ENCODE measurements at regions of chr19 and their contacts with region 1.

Region 1: DNA sequence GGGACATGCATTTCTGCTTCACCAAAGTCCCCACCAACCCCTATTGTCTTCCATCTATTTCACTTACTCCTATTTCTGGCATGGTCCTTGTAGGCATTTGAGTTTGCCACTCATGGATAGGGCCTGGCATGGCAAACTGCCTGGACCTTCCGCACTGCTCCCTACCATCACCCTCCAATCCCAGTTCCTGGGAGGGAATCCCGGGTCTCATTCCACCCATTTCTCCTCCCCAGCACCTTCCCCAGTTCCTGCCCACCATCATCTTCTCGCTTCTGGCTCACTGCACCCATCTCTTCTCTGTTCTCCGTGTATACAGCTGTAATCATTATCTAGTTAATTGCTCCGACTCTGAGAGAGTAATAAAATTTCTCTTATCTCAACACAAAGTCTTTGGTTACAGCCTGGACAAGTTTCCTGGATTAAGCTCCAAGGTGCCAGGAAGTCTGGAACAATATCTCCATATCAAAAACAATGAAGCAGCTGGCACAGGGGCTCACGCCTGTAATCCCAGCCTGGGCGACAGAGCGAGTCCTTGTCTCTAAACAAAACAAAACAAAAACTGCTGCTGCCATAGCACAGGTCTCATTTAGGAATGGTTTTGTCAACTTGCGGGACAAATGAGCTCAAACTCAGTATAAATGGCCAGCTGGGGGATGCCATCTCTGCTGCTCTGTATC is 17.0 kb upstream of the COX7A1 start:
- DNase-seq: no peak
- H3K4me3 ChIP-seq: no peak overlapping the region
- H3K27ac ChIP-seq: peak overlapping the region; percentile 68 to 84 (median 70)
- H3K4me1 ChIP-seq: peaks cover 17 to 24% (median 19%) of the 10 kb centered on the region in 4 donors
- H3K27me3 ChIP-seq: no peaks in the 10 kb centered on the region
- CTCF ChIP-seq: no peak
- EP300 ChIP-seq: no peak
- POLR2A ChIP-seq: no peak

Region 2: GRCh38 chr19:36060430-36060829 is 108.8 kb before region 1 on chr19:
- intact Hi-C with region 1: loop called (anchors 10 kb)
- DNase-seq: no peak
- H3K4me3 ChIP-seq: no peak overlapping the region
- H3K27ac ChIP-seq: no peak overlapping the region
- H3K4me1 ChIP-seq: peaks cover under 1 to 4% (median 2%) of the 10 kb centered on the region in 4 donors
- H3K27me3 ChIP-seq: no peaks in the 10 kb centered on the region
- CTCF ChIP-seq: peak; percentile 26 to 52 (median 29)
- EP300 ChIP-seq: no peak
- POLR2A ChIP-seq: no peak

Region 3: DNA sequence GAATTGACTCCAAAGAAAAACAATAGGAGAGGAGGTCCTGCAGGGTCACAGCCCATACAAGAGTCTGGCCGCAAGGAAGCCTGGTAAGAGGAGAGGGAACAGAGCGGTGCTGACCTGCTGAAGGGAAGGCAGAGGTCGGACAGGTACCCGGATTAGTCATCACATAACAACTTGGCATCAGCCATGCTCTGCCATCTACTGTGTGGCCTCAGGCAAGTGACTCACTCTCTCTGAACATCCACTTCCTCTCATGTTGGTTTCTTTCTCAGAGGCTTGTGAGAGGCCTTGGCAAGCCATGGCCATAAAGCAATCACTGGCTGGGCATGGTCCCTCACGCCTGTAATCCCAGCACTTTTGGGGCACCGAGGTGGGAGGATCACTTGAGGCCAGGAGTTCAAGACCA is 36.7 kb before region 1 on chr19:
- intact Hi-C with region 1: loop called (anchors 1 kb)
- DNase-seq: no peak
- H3K4me3 ChIP-seq: no peak overlapping the region
- H3K27ac ChIP-seq: no peak overlapping the region
- H3K4me1 ChIP-seq: peaks cover 20 to 35% (median 31%) of the 10 kb centered on the region in 4 donors
- H3K27me3 ChIP-seq: no peaks in the 10 kb centered on the region
- CTCF ChIP-seq: no peak
- EP300 ChIP-seq: no peak
- POLR2A ChIP-seq: no peak

Region 4: DNA sequence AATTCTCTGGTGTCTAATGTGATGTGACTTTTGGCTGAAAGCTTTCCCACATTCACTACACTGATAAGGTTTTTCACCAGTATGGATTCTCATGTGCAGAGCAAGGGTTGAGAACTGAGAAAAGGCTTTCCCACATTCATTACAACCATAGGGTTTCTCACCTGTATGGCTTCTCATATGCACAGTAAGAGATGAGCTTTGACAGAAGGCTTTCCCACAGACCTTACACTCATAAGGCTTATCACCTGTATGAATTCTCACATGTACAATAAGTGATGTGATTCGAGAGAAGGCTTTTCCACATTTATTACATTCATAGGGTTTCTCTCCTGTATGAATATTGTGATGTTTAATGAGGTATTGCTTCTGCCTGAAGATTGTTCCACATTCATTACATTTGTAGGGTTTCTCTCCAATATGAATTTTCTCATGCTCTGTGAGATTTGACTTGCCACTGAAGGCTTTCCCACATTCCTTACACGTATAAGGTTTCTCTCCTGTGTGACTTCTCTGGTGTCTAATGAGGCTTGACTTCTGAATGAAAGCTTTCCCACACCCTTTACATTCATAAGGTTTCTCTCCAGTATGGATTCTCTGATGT is 344.9 kb after region 1 on chr19:
- intact Hi-C with region 1: no loop called
- DNase-seq: no peak
- H3K4me3 ChIP-seq: no peak overlapping the region
- H3K27ac ChIP-seq: no peak overlapping the region
- H3K4me1 ChIP-seq: no peaks in the 10 kb centered on the region
- H3K27me3 ChIP-seq: no peaks in the 10 kb centered on the region
- CTCF ChIP-seq: no peak
- EP300 ChIP-seq: no peak
- POLR2A ChIP-seq: no peak

Measured in esophagus muscularis mucosa (tissue), 4 donors.